ENCODE measurements at regions of chr13 and their contacts with region 1.

Region 1: GRCh38 chr13:24381539-24382265 is 72.3 kb downstream of the C1QTNF9 start:
- DNase-seq: no peak
- H3K4me3 ChIP-seq: no peak overlapping the region
- CTCF ChIP-seq: no peak
- POLR2A ChIP-seq: no peak

Region 2: GRCh38 chr13:26112843-26113242 is 1731.1 kb after region 1 on chr13:
- intact Hi-C with region 1: loop called (anchors 10 kb)
- DNase-seq: no peak
- H3K4me3 ChIP-seq: no peak overlapping the region
- CTCF ChIP-seq: no peak
- POLR2A ChIP-seq: no peak